Right cardiac atrium (tissue), 5 donors: ENCODE measurements at regions of chr14 and their contacts with region 1.

Region 1: DNA sequence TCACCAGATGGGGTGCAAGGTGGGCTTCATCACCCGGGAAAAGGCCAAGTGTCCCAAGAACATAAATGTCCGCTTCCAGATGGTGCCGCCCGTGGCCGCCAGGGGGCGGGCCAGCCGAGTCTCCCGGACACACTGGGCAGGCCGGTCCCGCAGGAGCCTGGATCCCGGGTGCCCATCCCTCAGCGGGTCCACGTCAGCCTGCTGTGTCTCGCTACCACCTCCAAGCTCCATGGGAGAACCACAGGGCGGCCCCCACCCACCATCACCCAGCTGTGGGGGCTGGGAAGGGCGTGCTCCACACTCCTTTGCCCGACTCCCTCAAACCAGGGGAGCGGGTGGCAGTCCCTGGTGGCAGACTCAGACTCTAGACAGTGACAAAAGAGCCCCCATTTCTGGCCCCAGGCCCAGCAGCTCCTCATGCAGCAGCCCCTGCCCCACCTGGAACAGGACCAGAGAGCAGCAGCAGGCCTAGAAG is 22.0 kb upstream of the NUDT14 start:
- DNase-seq: peak; percentile 79 to 91 (median 91)
- ATAC-seq: peak; percentile 47 to 52
- H3K4me3 ChIP-seq: no peak overlapping the region
- H3K27ac ChIP-seq: no peak overlapping the region
- H3K4me1 ChIP-seq: peaks cover 9% of the 10 kb centered on the region
- H3K27me3 ChIP-seq: no peaks in the 10 kb centered on the region

Region 2: DNA sequence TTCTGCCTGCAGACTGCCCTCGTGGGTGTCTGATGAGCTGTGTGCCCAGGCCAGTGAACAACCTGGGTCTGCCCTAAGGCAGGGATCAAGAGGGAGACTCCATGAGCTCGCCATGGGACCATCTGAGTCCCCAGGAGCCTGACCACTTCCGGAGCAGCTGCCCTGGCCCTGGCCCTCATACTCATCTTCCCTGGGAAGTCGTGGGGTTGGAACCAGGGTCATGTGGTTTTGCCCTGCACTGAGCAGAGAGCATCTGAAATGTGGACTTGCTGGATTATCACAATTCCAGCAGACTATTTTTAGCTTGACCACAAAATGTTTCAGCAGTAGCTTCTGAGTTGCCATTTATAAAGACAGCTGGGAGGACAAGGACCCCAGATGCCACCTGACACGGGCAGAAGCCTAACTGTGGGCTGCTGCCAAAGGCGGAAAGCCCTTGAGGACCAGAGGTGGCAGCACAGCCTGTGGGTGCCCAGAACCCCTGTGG is 52.0 kb after region 1 on chr14:
- intact Hi-C with region 1: no loop called
- DNase-seq: peak in 1 of 3 donors; percentile 41
- ATAC-seq: peak in 1 of 2 donors; percentile 38
- H3K4me3 ChIP-seq: no peak overlapping the region
- H3K27ac ChIP-seq: peak overlapping the region; percentile 26
- H3K4me1 ChIP-seq: no peaks in the 10 kb centered on the region
- H3K27me3 ChIP-seq: no peaks in the 10 kb centered on the region

Region 3: GRCh38 chr14:105281371-105282097 is 78.4 kb after region 1 on chr14:
- intact Hi-C with region 1: loop called in 2 of 4 experiments (anchors 5 to 10 kb)
- DNase-seq: no peak
- ATAC-seq: no peak
- H3K4me3 ChIP-seq: no peak overlapping the region
- H3K27ac ChIP-seq: no peak overlapping the region
- H3K4me1 ChIP-seq: no peaks in the 10 kb centered on the region
- H3K27me3 ChIP-seq: no peaks in the 10 kb centered on the region

Region 4: GRCh38 chr14:105351920-105352851 is 149.1 kb after region 1 on chr14:
- intact Hi-C with region 1: loop called (anchors 5 to 10 kb)
- DNase-seq: peak; percentile 83 to 89 (median 88)
- ATAC-seq: peak; percentile 83 to 85
- H3K4me3 ChIP-seq: no peak overlapping the region
- H3K27ac ChIP-seq: no peak overlapping the region
- H3K4me1 ChIP-seq: no peaks in the 10 kb centered on the region
- H3K27me3 ChIP-seq: no peaks in the 10 kb centered on the region

Region 5: GRCh38 chr14:105480952-105481801 is 278.1 kb after region 1 on chr14:
- intact Hi-C with region 1: loop called in 1 of 4 experiments (anchors 10 kb)
- DNase-seq: peak; percentile 89 to 96 (median 96)
- ATAC-seq: peak; percentile 61 to 66
- H3K4me3 ChIP-seq: peak overlapping the region; percentile 5
- H3K27ac ChIP-seq: peak overlapping the region; percentile 95
- H3K4me1 ChIP-seq: peaks cover 20% of the 10 kb centered on the region
- H3K27me3 ChIP-seq: no peaks in the 10 kb centered on the region

Region 6: GRCh38 chr14:105537369-105538164 is 334.5 kb after region 1 on chr14:
- intact Hi-C with region 1: loop called in 1 of 4 experiments (anchors 10 kb)
- DNase-seq: peak; percentile 40 to 81 (median 77)
- ATAC-seq: peak; percentile 58 to 60
- H3K4me3 ChIP-seq: no peak overlapping the region
- H3K27ac ChIP-seq: no peak overlapping the region
- H3K4me1 ChIP-seq: no peaks in the 10 kb centered on the region
- H3K27me3 ChIP-seq: no peaks in the 10 kb centered on the region